ENCODE measurements at regions of chr6 and their contacts with region 1.

Region 1: DNA sequence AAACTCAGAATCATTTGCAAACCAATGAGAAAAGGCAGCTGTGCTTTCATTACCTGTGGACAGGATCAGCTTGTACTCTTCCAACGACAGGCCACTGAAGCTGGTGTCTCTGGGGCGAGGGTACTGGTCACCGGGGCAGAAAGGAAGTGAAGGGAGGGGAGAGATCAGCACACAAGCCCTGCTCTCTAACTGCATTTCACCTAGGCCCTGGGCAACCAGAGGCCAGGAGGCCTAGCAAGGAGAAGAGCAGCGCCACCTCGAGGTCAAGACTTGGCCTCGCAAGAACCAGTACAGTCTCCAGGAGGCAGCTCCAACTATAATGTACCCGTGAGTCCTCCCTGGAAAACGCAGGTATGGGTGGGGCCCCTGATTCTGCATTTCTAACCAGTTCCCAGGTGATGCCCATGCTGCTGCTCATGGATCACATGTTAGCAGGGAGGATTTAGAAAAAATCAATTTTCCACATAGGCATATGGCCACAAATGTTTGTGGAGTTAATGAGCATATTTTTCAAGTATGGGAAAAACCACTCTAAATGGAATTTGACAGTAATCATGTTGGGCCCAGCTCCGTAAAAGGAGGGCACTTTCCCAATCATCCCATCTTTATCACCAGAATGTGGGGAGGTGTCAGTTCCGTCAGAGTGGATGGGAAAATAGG is 11.0 kb downstream of the UQCC2 start:
- DNase-seq: peak; percentile 89
- H3K4me3 Mint-ChIP-seq: no peak overlapping the region
- H3K27ac Mint-ChIP-seq: peak overlapping the region; percentile 26
- H3K4me1 Mint-ChIP-seq: peaks cover 49% of the 10 kb centered on the region
- H3K27me3 Mint-ChIP-seq: no peaks in the 10 kb centered on the region

Region 2: GRCh38 chr6:33633462-33634158 is 66.9 kb before region 1 on chr6:
- CTCF ChIA-PET with region 1: no interaction called
- intact Hi-C with region 1: loop called (anchors 2 kb)
- DNase-seq: peak; percentile 40
- H3K4me3 Mint-ChIP-seq: peak overlapping the region; percentile 74
- H3K27ac Mint-ChIP-seq: peak overlapping the region; percentile 27
- H3K4me1 Mint-ChIP-seq: peaks cover 61% of the 10 kb centered on the region
- H3K27me3 Mint-ChIP-seq: no peaks in the 10 kb centered on the region

Measured in activated naive CD4-positive, alpha-beta T cell treated with anti-CD3 and anti-CD28 coated beads for 36 hours (primary cell).